Sigmoid colon (tissue), 7 donors: ENCODE measurements at regions of chr19 and their contacts with region 1.

Region 1: GRCh38 chr19:15836595-15837337 is 21.3 kb upstream of the OR10H1 start:
- DNase-seq: peak; percentile 99
- H3K4me3 ChIP-seq: peak overlapping the region; percentile 58 to 91 (median 75)
- H3K27ac ChIP-seq: peak overlapping the region; percentile 90 to 100 (median 98)
- H3K4me1 ChIP-seq: peaks cover 0 to 13% (median 6%) of the 10 kb centered on the region in 4 donors
- H3K27me3 ChIP-seq: no peaks in the 10 kb centered on the region
- CTCF ChIP-seq: no peak
- EP300 ChIP-seq: peak in 2 of 4 donors; percentile 20 to 37
- POLR2A ChIP-seq: peak; percentile 83 to 92

Region 2: GRCh38 chr19:15672580-15673175 is 164.1 kb before region 1 on chr19 and contains the start of gene CYP4F12:
- intact Hi-C with region 1: loop called (anchors 2 kb)
- DNase-seq: peak; percentile 97
- H3K4me3 ChIP-seq: peak within 1 kb of the TSS in 2 of 4 donors; percentile 20 to 28
- H3K27ac ChIP-seq: peak within 1 kb of the TSS; percentile 61 to 76 (median 72)
- H3K4me1 ChIP-seq: peaks cover 0 to 21% (median 17%) of the 10 kb centered on the region in 4 donors
- H3K27me3 ChIP-seq: no peaks in the 10 kb centered on the region
- CTCF ChIP-seq: no peak
- EP300 ChIP-seq: no peak
- POLR2A ChIP-seq: peak in 1 of 2 donors; percentile 24
- total RNA-seq, gene CYP4F12: 10.5 to 18.8 (median 13.7) TPM

Region 3: GRCh38 chr19:15779756-15780476 is 56.9 kb before region 1 on chr19:
- intact Hi-C with region 1: loop called (anchors 5 kb)
- DNase-seq: peak; percentile 92
- H3K4me3 ChIP-seq: peak overlapping the region in 3 of 4 donors; percentile 3 to 33 (median 18)
- H3K27ac ChIP-seq: peak overlapping the region; percentile 72 to 79 (median 77)
- H3K4me1 ChIP-seq: peaks cover 0 to 25% (median 22%) of the 10 kb centered on the region in 4 donors
- H3K27me3 ChIP-seq: no peaks in the 10 kb centered on the region
- CTCF ChIP-seq: no peak
- EP300 ChIP-seq: no peak
- POLR2A ChIP-seq: no peak

Region 4: GRCh38 chr19:15846923-15847322 is 10.2 kb after region 1 on chr19:
- intact Hi-C with region 1: no loop called
- DNase-seq: no peak
- H3K4me3 ChIP-seq: no peak overlapping the region
- H3K27ac ChIP-seq: no peak overlapping the region
- H3K4me1 ChIP-seq: no peaks in the 10 kb centered on the region
- H3K27me3 ChIP-seq: no peaks in the 10 kb centered on the region
- CTCF ChIP-seq: no peak
- EP300 ChIP-seq: no peak
- POLR2A ChIP-seq: no peak

Region 5: GRCh38 chr19:16111160-16111908 is 274.6 kb after region 1 on chr19 and contains the start of gene RAB8A:
- intact Hi-C with region 1: loop called (anchors 10 kb)
- DNase-seq: peak; percentile 100
- H3K4me3 ChIP-seq: peak within 1 kb of the TSS; percentile 94 to 99 (median 94)
- H3K27ac ChIP-seq: peak within 1 kb of the TSS; percentile 91 to 96 (median 95)
- H3K4me1 ChIP-seq: peaks cover 0 to 49% (median 42%) of the 10 kb centered on the region in 4 donors
- H3K27me3 ChIP-seq: no peaks in the 10 kb centered on the region
- CTCF ChIP-seq: peak; percentile 89 to 98 (median 96)
- EP300 ChIP-seq: no peak
- POLR2A ChIP-seq: no peak
- total RNA-seq, gene RAB8A: 32.8 to 43.9 (median 34.9) TPM

Region 6: GRCh38 chr19:16185123-16185767 is 348.5 kb after region 1 on chr19 and contains the start of gene FAM32A:
- intact Hi-C with region 1: loop called (anchors 5 kb)
- DNase-seq: peak; percentile 100
- H3K4me3 ChIP-seq: peak within 1 kb of the TSS; percentile 81 to 90 (median 83)
- H3K27ac ChIP-seq: peak within 1 kb of the TSS; percentile 83 to 87 (median 84)
- H3K4me1 ChIP-seq: peaks cover 0 to 25% (median 21%) of the 10 kb centered on the region in 4 donors
- H3K27me3 ChIP-seq: no peaks in the 10 kb centered on the region
- CTCF ChIP-seq: no peak
- EP300 ChIP-seq: no peak
- POLR2A ChIP-seq: peak; percentile 74 to 78
- total RNA-seq, gene FAM32A: 86.9 to 97.7 (median 92.5) TPM

Region 7: GRCh38 chr19:16470911-16471811 is 634.4 kb after region 1 on chr19:
- intact Hi-C with region 1: loop called (anchors 5 kb)
- DNase-seq: no peak
- H3K4me3 ChIP-seq: peak overlapping the region; percentile 48 to 99 (median 92)
- H3K27ac ChIP-seq: peak overlapping the region; percentile 90 to 94 (median 91)
- H3K4me1 ChIP-seq: peaks cover 0 to 39% (median 26%) of the 10 kb centered on the region in 4 donors
- H3K27me3 ChIP-seq: no peaks in the 10 kb centered on the region
- CTCF ChIP-seq: no peak
- EP300 ChIP-seq: no peak
- POLR2A ChIP-seq: no peak